Left ventricle myocardium superior (tissue), 1 donor: ENCODE measurements at regions of chr11 and their contacts with region 1.

Region 1: DNA sequence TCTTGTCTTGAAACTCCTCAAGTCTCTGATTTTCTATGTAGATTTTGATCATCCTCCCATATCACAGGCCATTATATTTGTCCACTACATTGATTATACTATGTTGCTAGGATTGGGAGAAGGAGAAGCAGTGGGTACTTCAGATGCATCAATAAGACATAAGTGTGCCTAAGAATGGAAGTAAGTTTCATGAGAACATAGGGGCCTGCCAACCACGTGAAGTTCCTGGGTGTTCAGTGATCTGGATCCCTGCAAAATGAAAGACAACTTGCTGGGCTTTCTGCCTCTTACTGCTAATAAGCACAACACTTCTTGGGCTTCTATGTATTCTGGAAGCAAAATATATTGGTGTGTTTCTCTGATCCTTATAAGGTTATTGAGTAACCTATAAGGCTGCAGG is 17.8 kb downstream of the SERPINH1 start:
- DNase-seq: no peak
- ATAC-seq: no peak

Region 2: DNA sequence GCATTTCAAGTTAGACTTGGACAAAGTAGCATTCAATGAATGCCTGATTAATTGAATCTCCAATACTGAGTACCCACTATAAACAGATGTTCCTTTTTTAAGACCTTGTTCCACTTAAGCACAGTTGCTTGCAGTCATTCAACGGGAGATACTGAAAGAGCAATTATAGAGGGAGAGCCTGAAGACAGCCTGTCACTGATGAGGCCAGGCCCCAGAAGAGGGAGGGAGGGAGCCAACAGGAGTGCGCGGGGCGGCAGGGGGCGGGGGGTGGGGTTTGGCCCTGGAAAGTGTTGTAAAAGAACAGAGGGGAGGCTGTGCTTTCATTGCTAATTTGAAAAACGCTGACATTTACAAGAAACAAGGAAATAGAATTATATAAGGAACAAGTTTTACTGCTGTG is 35.9 kb after region 1 on chr11:
- intact Hi-C with region 1: loop called (anchors 2 kb)
- DNase-seq: no peak
- ATAC-seq: no peak

Region 3: GRCh38 chr11:75697906-75698563 is 118.2 kb after region 1 on chr11:
- intact Hi-C with region 1: no loop called
- DNase-seq: no peak
- ATAC-seq: no peak